Lower leg skin (tissue), 4 donors: ENCODE measurements at regions of chr3 and their contacts with region 1.

Region 1: GRCh38 chr3:192566706-192567290 is 160.5 kb downstream of the FGF12 start:
- DNase-seq: peak; percentile 67 to 89
- H3K4me3 ChIP-seq: no peak overlapping the region
- CTCF ChIP-seq: no peak
- POLR2A ChIP-seq: no peak

Region 2: DNA sequence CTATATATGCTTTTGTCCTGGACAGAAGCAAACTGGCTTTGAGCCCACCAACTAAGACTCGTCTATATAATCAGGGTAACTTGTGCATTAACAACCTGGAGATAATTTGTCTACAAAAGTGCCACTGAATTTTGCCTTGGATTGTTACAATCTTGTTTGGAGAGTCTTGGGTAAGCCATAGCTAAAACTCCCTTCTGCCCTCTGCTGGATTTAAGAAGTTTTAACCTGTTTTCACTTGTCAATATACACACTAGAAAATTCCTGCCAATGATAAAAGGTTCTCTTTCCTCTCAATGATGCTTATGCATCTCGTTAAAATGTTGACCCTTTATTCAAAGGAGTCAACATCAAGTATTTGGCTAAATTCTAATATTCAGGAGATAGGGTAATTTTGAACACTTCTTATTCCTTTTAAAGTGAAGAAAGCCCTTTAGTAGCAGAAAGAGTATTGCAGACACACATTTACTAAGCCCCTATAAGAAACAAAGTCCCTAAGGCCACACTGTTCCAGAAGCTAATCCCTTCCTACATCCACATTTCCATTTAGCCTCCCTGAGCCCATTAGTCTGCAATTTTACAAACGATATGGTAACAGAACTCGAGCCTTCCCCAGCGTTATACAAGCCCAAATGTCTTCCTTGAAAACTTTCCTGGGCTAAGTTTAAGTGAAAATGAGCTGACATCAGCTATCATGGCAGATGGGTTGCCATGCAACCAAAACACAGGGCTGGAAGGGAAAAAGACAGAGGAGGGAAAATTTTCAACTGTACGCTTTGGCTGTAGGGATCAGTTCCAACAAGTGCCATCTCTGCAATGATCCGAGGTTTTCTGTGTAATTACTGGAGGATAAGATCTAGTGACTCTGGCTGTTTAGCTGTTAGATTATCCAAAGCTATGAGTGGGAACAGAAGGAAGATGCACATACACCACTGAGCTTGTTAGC is 236.4 kb after region 1 on chr3:
- intact Hi-C with region 1: loop called (anchors 10 kb)
- DNase-seq: no peak
- H3K4me3 ChIP-seq: no peak overlapping the region
- CTCF ChIP-seq: no peak
- POLR2A ChIP-seq: no peak